CD8-positive, alpha-beta T cell (primary cell): ENCODE measurements at regions of chr3 and their contacts with region 1.

Region 1: GRCh38 chr3:9932843-9933560 is 632 bp upstream of the CRELD1 start:
- DNase-seq: peak; percentile 77 to 94 (median 87)
- ATAC-seq: peak; percentile 59
- H3K4me3 ChIP-seq: peak overlapping the region; percentile 85 to 95
- H3K4me3 Mint-ChIP-seq: peak overlapping the region; percentile 95
- H3K27ac ChIP-seq: peak overlapping the region; percentile 90 to 100
- H3K27ac Mint-ChIP-seq: peak overlapping the region; percentile 99
- H3K4me1 ChIP-seq: peaks cover 32% of the 10 kb centered on the region
- H3K4me1 Mint-ChIP-seq: peaks cover 47% of the 10 kb centered on the region
- H3K27me3 ChIP-seq: no peaks in the 10 kb centered on the region
- H3K27me3 Mint-ChIP-seq: no peaks in the 10 kb centered on the region
- CTCF ChIP-seq: peak; percentile 79

Region 2: DNA sequence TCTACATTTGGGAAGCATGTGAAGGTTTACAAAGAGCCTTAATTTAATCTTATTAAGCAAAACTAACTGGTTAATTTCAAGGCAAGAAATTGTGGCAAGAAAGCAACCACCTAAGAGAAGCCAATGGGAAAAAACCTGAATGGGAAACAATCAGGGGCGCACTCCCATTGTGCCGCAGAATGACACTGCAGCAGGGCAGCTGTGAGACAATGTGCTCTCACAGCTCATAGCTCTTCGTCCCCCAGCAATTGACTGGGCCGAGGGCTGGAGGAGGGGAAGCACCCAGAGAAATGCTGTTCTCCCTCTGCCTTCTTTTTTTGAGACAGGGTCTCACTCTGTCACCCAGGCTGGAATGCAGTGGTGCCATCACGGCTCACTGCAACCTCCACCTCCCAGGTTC is 876.4 kb before region 1 on chr3:
- CTCF ChIA-PET with region 1: no interaction called
- POLR2A ChIA-PET with region 1: no interaction called
- intact Hi-C with region 1: no loop called
- DNase-seq: no peak
- ATAC-seq: no peak
- H3K4me3 ChIP-seq: no peak overlapping the region
- H3K4me3 Mint-ChIP-seq: no peak overlapping the region
- H3K27ac ChIP-seq: no peak overlapping the region
- H3K27ac Mint-ChIP-seq: no peak overlapping the region
- H3K4me1 ChIP-seq: no peaks in the 10 kb centered on the region
- H3K4me1 Mint-ChIP-seq: no peaks in the 10 kb centered on the region
- H3K27me3 ChIP-seq: no peaks in the 10 kb centered on the region
- H3K27me3 Mint-ChIP-seq: no peaks in the 10 kb centered on the region
- CTCF ChIP-seq: no peak

Region 3: DNA sequence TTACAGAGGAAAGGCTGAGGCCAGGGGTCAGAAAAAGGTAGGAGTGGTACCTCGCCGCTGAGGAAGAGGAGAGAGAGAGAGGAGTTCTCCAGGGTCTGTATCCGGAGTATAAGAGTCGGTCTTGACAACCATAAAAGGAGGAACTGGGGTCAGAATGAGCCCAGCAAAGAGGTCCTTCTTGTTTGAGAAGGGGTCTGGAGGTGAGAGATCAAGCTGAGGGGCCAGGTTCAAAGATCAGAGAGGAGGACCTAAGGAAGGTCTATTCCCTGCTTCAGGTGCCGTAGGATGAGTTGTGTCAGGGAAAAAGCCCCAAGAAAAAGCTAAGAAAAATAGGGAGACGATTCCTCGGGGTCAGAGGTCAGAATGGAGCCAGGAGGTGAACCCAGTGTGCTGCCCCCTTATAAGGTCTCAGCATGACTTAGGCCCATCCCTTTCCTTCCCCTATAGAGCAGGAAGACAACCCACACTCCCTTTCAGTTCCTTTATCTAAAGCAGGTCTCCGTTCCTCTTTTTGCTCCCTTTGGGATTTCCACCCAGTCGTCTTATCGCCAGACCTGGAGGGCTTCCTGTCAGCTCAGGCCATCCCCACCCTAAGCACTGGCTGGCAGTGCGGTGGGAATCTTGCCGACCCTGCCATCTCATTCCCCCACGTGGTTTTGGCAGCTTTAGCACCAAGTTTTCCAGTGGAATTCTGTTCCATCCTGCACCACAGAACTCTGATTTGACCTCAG is 283.0 kb before region 1 on chr3:
- CTCF ChIA-PET with region 1: no interaction called
- POLR2A ChIA-PET with region 1: interaction called, 8 read pairs
- intact Hi-C with region 1: loop called in 1 of 2 experiments (anchors 1 kb)
- DNase-seq: peak in 2 of 9 experiments; percentile 10 to 42
- ATAC-seq: no peak
- H3K4me3 ChIP-seq: peak overlapping the region; percentile 90 to 91
- H3K4me3 Mint-ChIP-seq: peak overlapping the region; percentile 93
- H3K27ac ChIP-seq: peak overlapping the region; percentile 88 to 94
- H3K27ac Mint-ChIP-seq: peak overlapping the region; percentile 97
- H3K4me1 ChIP-seq: peaks cover 27% of the 10 kb centered on the region
- H3K4me1 Mint-ChIP-seq: peaks cover 39% of the 10 kb centered on the region
- H3K27me3 ChIP-seq: no peaks in the 10 kb centered on the region
- H3K27me3 Mint-ChIP-seq: no peaks in the 10 kb centered on the region
- CTCF ChIP-seq: no peak

Region 4: GRCh38 chr3:9843715-9844438 is 89.1 kb before region 1 on chr3 and contains the start of gene RPUSD3:
- CTCF ChIA-PET with region 1: interaction called, 5 read pairs
- POLR2A ChIA-PET with region 1: interaction called, 4 read pairs
- intact Hi-C with region 1: loop called (anchors 2 kb)
- DNase-seq: peak; percentile 93 to 99 (median 96)
- ATAC-seq: peak; percentile 98
- H3K4me3 ChIP-seq: peak within 1 kb of the TSS; percentile 96 to 99
- H3K4me3 Mint-ChIP-seq: peak within 1 kb of the TSS; percentile 97
- H3K27ac ChIP-seq: peak within 1 kb of the TSS; percentile 64 to 82
- H3K27ac Mint-ChIP-seq: peak within 1 kb of the TSS; percentile 90
- H3K4me1 ChIP-seq: peaks cover 6% of the 10 kb centered on the region
- H3K4me1 Mint-ChIP-seq: peaks cover 26% of the 10 kb centered on the region
- H3K27me3 ChIP-seq: no peaks in the 10 kb centered on the region
- H3K27me3 Mint-ChIP-seq: no peaks in the 10 kb centered on the region
- CTCF ChIP-seq: no peak
- total RNA-seq, gene RPUSD3: 5.3 to 6.4 TPM

Region 5: GRCh38 chr3:9951962-9952805 is 19.2 kb after region 1 on chr3 and contains the start of gene PRRT3:
- CTCF ChIA-PET with region 1: interaction called, 22 read pairs
- POLR2A ChIA-PET with region 1: interaction called, 46 read pairs
- intact Hi-C with region 1: loop called (anchors 1 kb)
- DNase-seq: peak; percentile 22 to 74 (median 56)
- ATAC-seq: peak; percentile 93
- H3K4me3 ChIP-seq: peak within 1 kb of the TSS; percentile 58 to 64
- H3K4me3 Mint-ChIP-seq: peak within 1 kb of the TSS; percentile 90
- H3K27ac ChIP-seq: no peak within 1 kb of the TSS
- H3K27ac Mint-ChIP-seq: no peak within 1 kb of the TSS
- H3K4me1 ChIP-seq: peaks cover 12% of the 10 kb centered on the region
- H3K4me1 Mint-ChIP-seq: peaks cover 17% of the 10 kb centered on the region
- H3K27me3 ChIP-seq: no peaks in the 10 kb centered on the region
- H3K27me3 Mint-ChIP-seq: no peaks in the 10 kb centered on the region
- CTCF ChIP-seq: no peak
- total RNA-seq, gene PRRT3: 6.4 to 6.9 TPM

Region 6: GRCh38 chr3:10115326-10116137 is 182.5 kb after region 1 on chr3 and contains the start of gene BRK1:
- CTCF ChIA-PET with region 1: no interaction called
- POLR2A ChIA-PET with region 1: interaction called, 4 read pairs
- intact Hi-C with region 1: loop called (anchors 1 kb)
- DNase-seq: peak; percentile 83 to 98 (median 93)
- ATAC-seq: peak; percentile 98
- H3K4me3 ChIP-seq: peak within 1 kb of the TSS; percentile 87 to 95
- H3K4me3 Mint-ChIP-seq: peak within 1 kb of the TSS; percentile 99
- H3K27ac ChIP-seq: peak within 1 kb of the TSS; percentile 81 to 87
- H3K27ac Mint-ChIP-seq: peak within 1 kb of the TSS; percentile 99
- H3K4me1 ChIP-seq: peaks cover 27% of the 10 kb centered on the region
- H3K4me1 Mint-ChIP-seq: peaks cover 43% of the 10 kb centered on the region
- H3K27me3 ChIP-seq: no peaks in the 10 kb centered on the region
- H3K27me3 Mint-ChIP-seq: peaks cover under 1% of the 10 kb centered on the region
- CTCF ChIP-seq: no peak
- total RNA-seq, gene BRK1: 31.5 to 36.3 TPM

Region 7: DNA sequence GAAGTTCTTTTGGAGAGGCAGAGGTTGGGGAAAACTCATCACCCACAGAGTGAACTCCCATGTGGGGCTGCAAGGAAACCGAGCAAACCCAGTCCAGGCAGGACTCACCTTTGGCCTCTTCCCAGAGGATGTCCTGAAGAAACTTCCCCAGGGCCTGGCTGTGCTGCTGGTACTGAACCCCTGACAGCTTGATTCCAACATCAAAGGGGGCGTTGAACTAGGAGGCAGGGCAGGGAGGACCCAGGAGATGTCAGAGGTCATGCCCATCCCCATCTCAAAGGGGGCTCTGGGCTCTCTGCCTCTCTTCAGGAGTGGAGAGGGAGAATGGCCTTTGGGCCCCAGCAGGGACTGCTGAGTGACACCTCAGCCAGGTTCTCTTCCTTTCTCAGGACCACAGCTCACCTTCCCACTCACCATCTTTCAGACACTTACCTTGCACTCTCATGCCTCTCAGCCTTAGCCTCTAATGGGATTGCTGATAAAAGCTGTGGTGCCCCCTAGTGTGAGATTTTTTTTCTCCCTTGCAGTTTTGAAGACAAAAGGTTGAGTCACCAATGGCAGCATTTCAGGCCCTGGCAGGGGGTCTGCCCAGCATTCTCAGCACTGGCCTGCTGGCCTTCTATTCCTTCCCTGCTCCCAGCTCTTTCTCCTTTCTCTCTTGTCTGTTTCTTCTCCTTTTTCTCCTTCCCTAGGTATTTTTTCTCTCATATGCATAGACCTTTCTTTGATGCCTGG is 353.8 kb after region 1 on chr3:
- CTCF ChIA-PET with region 1: interaction called, 3 read pairs
- POLR2A ChIA-PET with region 1: no interaction called
- intact Hi-C with region 1: loop called in 1 of 2 experiments (anchors 10 kb)
- DNase-seq: peak in 2 of 9 experiments; percentile 41 to 67
- ATAC-seq: peak; percentile 34
- H3K4me3 ChIP-seq: no peak overlapping the region
- H3K4me3 Mint-ChIP-seq: no peak overlapping the region
- H3K27ac ChIP-seq: no peak overlapping the region
- H3K27ac Mint-ChIP-seq: peak overlapping the region; percentile 61
- H3K4me1 ChIP-seq: peaks cover 13% of the 10 kb centered on the region
- H3K4me1 Mint-ChIP-seq: peaks cover 20% of the 10 kb centered on the region
- H3K27me3 ChIP-seq: no peaks in the 10 kb centered on the region
- H3K27me3 Mint-ChIP-seq: no peaks in the 10 kb centered on the region
- CTCF ChIP-seq: peak; percentile 32